Activated CD4-positive, alpha-beta memory T cell treated with anti-CD3 and anti-CD28 coated beads for 36 hours (primary cell): ENCODE measurements at regions of chr10 and their contacts with region 1.

Region 1: DNA sequence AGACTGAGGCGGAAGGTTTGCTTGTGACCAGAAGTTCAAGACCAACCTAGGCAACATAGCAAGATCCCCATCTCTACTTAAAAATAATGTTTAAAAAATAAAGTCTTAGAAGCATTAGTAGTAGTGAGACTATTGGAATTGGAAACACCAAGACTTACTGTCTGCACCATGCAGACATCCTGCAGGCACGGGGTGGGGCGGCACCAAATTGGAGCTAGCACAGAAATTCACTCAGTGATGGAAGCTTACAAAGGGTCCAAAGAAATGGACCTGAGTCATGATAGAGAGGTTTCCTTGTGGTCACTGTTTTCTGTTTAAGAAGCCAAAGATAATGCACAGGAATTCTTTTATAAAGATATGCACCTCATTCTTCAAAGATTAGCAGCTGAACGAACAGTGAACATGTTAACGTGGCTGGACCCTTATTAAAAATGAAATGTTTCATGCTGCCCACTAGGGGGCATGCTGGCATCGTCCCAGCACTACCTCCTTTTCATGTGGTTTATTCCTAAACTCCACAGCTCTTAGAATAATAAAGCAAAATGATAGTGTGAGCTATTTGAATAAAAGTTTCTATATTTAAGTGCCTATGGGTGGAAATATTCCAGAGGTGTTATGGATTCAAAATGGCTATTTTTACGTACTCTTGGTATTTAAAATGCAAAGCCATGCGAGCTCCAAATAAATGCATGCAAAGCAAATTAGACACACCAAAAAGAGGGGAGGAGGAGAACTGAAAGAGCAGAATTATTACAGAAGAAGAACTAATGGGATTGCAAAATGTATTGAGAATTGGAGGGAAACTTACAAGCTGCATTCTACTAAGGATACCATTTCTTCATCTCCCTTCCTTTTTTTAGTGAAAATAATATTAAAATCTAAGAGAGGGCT is 28.6 kb downstream of the PDSS1 start:
- DNase-seq: peak; percentile 58
- H3K4me3 Mint-ChIP-seq: no peak overlapping the region
- H3K27ac Mint-ChIP-seq: no peak overlapping the region
- H3K4me1 Mint-ChIP-seq: peaks cover 4% of the 10 kb centered on the region
- H3K27me3 Mint-ChIP-seq: no peaks in the 10 kb centered on the region

Region 2: DNA sequence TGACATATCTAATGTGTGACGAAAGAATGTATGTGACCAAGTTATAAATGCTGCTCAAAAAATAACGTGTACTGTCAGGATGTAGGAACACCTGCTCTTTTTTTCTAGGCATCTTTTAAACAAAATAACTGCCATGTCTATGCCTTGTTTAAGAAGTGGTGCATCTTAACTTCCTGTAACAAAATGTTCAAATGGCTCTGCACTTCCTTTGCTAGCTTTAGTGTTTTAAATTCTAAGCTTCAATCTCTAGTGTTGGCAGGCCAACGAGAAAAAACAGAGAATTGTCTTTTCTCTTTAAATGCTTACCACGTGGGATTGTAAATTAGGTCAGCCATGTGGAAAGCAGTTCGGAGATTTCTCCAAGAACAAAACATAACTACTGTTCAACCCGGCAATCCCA is 43.2 kb before region 1 on chr10:
- CTCF ChIA-PET with region 1: interaction called, 10 read pairs
- POLR2A ChIA-PET with region 1: no interaction called
- intact Hi-C with region 1: no loop called
- DNase-seq: no peak
- H3K4me3 Mint-ChIP-seq: no peak overlapping the region
- H3K27ac Mint-ChIP-seq: peak overlapping the region; percentile 57
- H3K4me1 Mint-ChIP-seq: peaks cover 19% of the 10 kb centered on the region
- H3K27me3 Mint-ChIP-seq: peaks cover 4% of the 10 kb centered on the region

Region 3: DNA sequence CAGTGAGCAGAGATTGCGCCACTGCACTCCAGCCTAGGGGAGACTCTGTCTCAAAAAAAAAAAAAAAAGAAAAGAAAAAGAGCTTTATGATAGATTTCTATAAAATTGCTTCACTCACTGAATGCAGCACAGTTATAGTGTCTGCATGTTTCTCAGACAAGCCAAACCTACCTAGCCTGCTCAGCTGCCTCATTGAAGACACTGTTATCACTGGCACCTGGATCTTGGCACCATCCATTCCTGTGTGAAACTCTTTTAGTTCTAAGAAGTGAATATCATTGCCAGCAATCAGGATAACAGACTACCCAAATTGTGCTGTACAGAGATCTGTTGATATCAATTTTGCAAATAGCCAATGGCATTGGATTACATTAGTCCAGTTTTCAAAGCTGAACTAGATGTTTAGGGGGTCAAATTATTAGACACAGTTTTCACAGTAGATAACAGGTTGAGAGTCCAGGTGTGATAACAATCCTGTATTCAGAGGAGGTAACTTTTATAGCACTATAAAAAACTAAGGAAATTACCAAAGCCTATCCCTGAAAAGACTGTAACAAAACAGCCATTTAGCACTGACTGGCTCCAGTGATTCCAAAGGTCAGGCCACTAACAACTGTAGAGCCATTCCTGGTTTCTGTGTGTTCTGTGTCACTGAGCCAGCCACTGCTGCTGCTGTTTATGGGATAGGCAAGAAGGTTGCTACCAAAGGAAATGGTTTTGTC is 11.5 kb before region 1 on chr10:
- CTCF ChIA-PET with region 1: interaction called, 13 read pairs
- POLR2A ChIA-PET with region 1: no interaction called
- intact Hi-C with region 1: no loop called
- DNase-seq: no peak
- H3K4me3 Mint-ChIP-seq: no peak overlapping the region
- H3K27ac Mint-ChIP-seq: peak overlapping the region; percentile 23
- H3K4me1 Mint-ChIP-seq: no peaks in the 10 kb centered on the region
- H3K27me3 Mint-ChIP-seq: no peaks in the 10 kb centered on the region

Region 4: DNA sequence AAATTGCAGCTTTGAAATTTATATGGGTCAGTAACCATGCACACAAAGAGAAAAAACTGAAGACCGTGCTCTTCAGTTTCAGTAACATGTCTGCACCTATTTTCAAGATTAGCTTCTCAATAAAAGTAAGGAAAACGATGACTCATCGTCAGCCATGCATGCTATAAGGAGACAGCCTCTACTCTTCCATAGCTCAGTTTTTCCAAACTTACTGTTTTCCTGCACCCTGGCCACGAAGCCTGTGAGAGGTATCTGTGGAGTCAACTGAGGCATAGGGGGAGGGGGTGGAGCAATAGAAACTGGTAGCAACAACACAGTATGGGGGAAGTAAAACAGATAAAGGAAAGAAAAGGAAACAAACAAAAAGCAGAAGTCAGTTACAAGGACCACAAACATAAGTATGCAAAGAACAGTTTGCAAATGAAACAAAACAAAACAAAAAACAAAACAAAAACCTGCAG is 29.4 kb after region 1 on chr10:
- CTCF ChIA-PET with region 1: interaction called, 18 read pairs
- POLR2A ChIA-PET with region 1: no interaction called
- intact Hi-C with region 1: no loop called
- DNase-seq: no peak
- H3K4me3 Mint-ChIP-seq: no peak overlapping the region
- H3K27ac Mint-ChIP-seq: peak overlapping the region; percentile 43
- H3K4me1 Mint-ChIP-seq: peaks cover 6% of the 10 kb centered on the region
- H3K27me3 Mint-ChIP-seq: no peaks in the 10 kb centered on the region

Region 5: DNA sequence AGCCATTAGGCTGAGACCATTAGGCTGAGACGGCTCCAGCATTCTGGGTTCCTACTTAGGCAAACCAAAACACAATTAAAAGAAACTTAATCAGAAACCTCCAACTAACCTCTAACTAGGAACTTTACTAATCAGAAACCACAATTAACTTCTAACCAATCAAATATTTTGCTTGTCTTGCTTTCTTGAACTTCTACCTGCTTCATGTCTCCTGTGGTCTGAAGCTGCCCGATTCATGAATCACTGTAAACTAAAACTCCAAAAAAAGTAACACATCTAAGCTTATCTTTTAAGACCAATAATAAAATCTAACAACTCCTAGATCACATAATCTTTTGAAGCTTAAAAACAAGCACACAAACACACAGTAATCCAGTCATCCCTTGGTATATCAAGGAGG is 47.6 kb after region 1 on chr10:
- CTCF ChIA-PET with region 1: interaction called, 10 read pairs
- POLR2A ChIA-PET with region 1: no interaction called
- intact Hi-C with region 1: no loop called
- DNase-seq: no peak
- H3K4me3 Mint-ChIP-seq: no peak overlapping the region
- H3K27ac Mint-ChIP-seq: peak overlapping the region; percentile 45
- H3K4me1 Mint-ChIP-seq: peaks cover 43% of the 10 kb centered on the region
- H3K27me3 Mint-ChIP-seq: no peaks in the 10 kb centered on the region

Region 6: GRCh38 chr10:26780793-26781601 is 54.9 kb after region 1 on chr10:
- CTCF ChIA-PET with region 1: interaction called, 15 read pairs
- POLR2A ChIA-PET with region 1: no interaction called
- intact Hi-C with region 1: no loop called
- DNase-seq: peak; percentile 66
- H3K4me3 Mint-ChIP-seq: peak overlapping the region; percentile 21
- H3K27ac Mint-ChIP-seq: peak overlapping the region; percentile 82
- H3K4me1 Mint-ChIP-seq: peaks cover 81% of the 10 kb centered on the region
- H3K27me3 Mint-ChIP-seq: no peaks in the 10 kb centered on the region

Region 7: DNA sequence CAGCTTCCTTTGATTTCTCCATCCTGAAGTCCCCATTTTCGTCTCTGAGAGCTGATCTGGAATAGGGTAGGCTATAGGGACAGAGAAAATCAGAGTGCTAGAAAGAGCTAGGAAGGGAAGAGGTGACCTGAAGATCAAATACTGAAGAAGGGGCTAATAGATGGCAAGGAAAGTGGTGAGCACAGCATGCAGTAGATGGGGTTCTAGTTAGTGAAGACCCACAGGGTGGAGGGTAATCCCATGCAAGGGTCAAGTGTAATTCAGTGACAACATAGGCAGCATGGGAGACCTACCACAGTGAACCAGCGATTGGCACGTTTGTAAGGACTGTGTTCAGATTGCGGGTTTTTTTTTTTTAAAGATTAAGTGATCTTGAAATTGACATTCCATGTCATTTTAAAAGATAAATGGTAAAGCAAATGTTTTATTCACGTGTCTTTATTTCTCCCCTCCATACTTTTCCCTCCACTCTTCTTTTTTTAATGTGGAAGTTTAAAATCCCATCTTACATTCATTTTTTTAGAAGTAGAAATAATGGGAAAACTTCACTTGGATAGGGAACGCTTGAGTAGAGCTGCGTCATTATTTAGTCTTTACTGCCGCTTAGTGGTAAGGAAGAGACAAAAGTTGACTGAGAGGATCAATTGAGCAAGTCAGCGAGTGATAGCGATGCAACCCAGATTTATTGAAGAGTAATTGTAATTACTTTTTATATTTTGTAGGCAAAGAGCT is 155.7 kb after region 1 on chr10:
- CTCF ChIA-PET with region 1: interaction called, 131 read pairs
- POLR2A ChIA-PET with region 1: no interaction called
- intact Hi-C with region 1: loop called (anchors 1 kb)
- DNase-seq: no peak
- H3K4me3 Mint-ChIP-seq: no peak overlapping the region
- H3K27ac Mint-ChIP-seq: no peak overlapping the region
- H3K4me1 Mint-ChIP-seq: no peaks in the 10 kb centered on the region
- H3K27me3 Mint-ChIP-seq: peaks cover 12% of the 10 kb centered on the region